PC-3 (cell line): ENCODE measurements at regions of chr20 and their contacts with region 1.

Region 1: GRCh38 chr20:19784511-19785172 is 26.6 kb downstream of the RIN2 start:
- DNase-seq: peak; percentile 96
- ATAC-seq: peak; percentile 90
- H3K4me3 ChIP-seq: peak overlapping the region; percentile 31; the same call in 1 of the 2 replicates
- H3K27ac ChIP-seq: peak overlapping the region; percentile 91
- H3K4me1 ChIP-seq: peaks cover 44% of the 10 kb centered on the region
- H3K27me3 ChIP-seq: no peaks in the 10 kb centered on the region
- CTCF ChIP-seq: peak; percentile 94

Region 2: DNA sequence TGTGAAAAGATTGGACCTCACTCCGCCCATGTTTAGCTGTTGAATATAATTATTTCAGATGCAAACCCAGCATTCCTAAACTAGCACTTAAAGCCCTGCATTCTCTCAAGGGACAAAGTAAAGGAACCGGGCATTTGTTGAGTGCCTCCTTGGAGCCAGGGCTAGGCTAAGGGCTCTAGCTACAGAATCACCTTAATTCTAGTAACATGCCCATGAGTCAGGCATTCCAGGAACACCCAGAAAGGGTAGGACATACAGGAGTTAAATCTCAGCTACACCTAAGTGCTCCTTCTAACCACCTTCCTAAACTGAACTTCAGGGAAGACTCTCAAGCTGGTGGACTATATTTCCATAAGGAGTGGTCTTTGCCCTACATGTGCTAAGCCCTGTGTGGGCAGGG is 482.8 kb before region 1 on chr20:
- CTCF ChIA-PET with region 1: no interaction called
- POLR2A ChIA-PET with region 1: no interaction called
- intact Hi-C with region 1: no loop called
- DNase-seq: no peak
- ATAC-seq: no peak
- H3K4me3 ChIP-seq: no peak overlapping the region
- H3K27ac ChIP-seq: no peak overlapping the region
- H3K4me1 ChIP-seq: no peaks in the 10 kb centered on the region
- H3K27me3 ChIP-seq: peaks cover 22% of the 10 kb centered on the region
- CTCF ChIP-seq: no peak

Region 3: DNA sequence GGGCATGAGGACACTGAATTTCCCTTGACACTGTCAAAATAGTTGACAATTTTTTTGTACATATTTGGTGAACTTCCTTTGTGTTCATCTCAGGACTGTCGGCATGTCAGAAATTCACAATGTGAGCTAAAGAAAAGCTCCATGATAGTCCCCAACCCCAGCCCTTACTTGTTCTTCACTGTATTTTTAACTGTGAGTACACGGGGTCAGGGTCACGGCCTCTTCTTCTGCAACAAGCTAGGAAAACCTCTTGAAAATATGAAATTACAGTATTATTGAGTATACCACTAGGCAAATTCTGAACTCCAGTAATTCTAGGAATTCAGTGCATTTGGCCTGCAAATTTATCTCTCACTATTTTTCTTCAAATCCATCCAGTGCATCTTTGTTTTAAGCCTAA is 372.8 kb before region 1 on chr20:
- CTCF ChIA-PET with region 1: no interaction called
- POLR2A ChIA-PET with region 1: no interaction called
- intact Hi-C with region 1: no loop called
- DNase-seq: no peak
- ATAC-seq: no peak
- H3K4me3 ChIP-seq: no peak overlapping the region
- H3K27ac ChIP-seq: no peak overlapping the region
- H3K4me1 ChIP-seq: no peaks in the 10 kb centered on the region
- H3K27me3 ChIP-seq: peaks cover 46% of the 10 kb centered on the region
- CTCF ChIP-seq: no peak

Region 4: GRCh38 chr20:19735446-19735845 is 49.2 kb before region 1 on chr20:
- CTCF ChIA-PET with region 1: no interaction called
- POLR2A ChIA-PET with region 1: interaction called, 4 read pairs
- intact Hi-C with region 1: loop called (anchors 2 kb)
- DNase-seq: peak; percentile 97
- ATAC-seq: peak; percentile 90
- H3K4me3 ChIP-seq: 0 out of 2 replicates have a peak overlapping the region, but pooled peaks have one; percentile 3
- H3K27ac ChIP-seq: peak overlapping the region; percentile 96
- H3K4me1 ChIP-seq: peaks cover 48% of the 10 kb centered on the region
- H3K27me3 ChIP-seq: no peaks in the 10 kb centered on the region
- CTCF ChIP-seq: no peak

Region 5: DNA sequence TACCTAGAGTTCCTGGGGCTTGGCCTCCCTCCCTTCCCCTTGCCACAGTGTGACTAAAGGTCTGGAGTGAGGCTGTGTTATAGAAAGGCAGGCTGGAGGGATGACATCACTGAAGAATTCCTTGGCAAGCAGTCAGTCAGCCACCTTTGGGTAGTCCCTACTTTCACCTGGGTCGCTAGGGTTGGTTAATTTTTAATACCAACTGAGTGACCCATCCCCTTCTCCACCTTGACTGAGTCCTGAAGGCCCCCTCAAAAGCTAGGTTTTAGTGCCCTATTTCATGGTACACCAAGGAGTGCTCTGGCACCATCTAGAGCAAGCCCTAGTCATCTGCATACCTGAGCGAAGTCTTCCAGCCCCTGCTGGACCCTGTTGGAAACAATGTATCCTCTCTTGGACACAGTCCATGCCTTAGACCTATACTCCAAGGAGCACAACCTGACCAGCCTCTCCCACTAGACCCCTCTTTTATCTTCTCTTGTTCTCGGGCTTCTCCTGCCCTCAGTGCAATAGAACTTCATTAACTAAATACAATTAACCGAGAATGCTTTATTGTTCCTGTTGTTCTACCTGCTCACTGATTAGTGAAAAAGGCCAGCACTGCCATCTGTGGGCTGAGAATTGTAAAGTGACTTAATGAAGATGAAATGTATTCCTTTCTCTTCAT is 18.0 kb after region 1 on chr20:
- CTCF ChIA-PET with region 1: no interaction called
- POLR2A ChIA-PET with region 1: no interaction called
- intact Hi-C with region 1: loop called (anchors 1 kb)
- DNase-seq: peak; percentile 87
- ATAC-seq: peak; percentile 88
- H3K4me3 ChIP-seq: no peak overlapping the region
- H3K27ac ChIP-seq: peak overlapping the region; percentile 52
- H3K4me1 ChIP-seq: peaks cover 28% of the 10 kb centered on the region
- H3K27me3 ChIP-seq: no peaks in the 10 kb centered on the region
- CTCF ChIP-seq: peak; percentile 84

Region 6: DNA sequence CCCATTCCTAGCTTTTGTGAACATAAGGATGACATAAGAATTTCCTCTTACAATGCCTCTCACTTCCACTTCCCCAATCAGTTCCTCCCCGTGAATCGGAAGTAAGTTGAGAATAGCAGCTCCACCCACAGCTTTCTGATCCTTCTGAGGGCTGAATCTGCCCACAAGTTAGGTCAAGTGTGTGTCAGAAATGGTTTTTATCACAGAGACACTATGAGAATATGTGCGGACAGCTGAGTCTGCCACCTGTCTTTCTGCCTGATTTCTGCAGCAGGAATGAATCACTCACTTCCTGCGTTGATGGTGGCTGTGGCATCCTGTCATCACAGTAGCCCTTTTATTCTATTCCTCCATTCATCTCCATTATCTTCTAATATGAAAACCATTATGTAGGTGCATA is 43.6 kb after region 1 on chr20:
- CTCF ChIA-PET with region 1: interaction called, 3 read pairs
- POLR2A ChIA-PET with region 1: no interaction called
- intact Hi-C with region 1: loop called (anchors 1 kb)
- DNase-seq: peak; percentile 97
- ATAC-seq: peak; percentile 88
- H3K4me3 ChIP-seq: no peak overlapping the region
- H3K27ac ChIP-seq: peak overlapping the region; percentile 95
- H3K4me1 ChIP-seq: peaks cover 45% of the 10 kb centered on the region
- H3K27me3 ChIP-seq: no peaks in the 10 kb centered on the region
- CTCF ChIP-seq: peak; percentile 67

Region 7: GRCh38 chr20:19889011-19889953 is 104.6 kb after region 1 on chr20:
- CTCF ChIA-PET with region 1: interaction called, 13 read pairs
- POLR2A ChIA-PET with region 1: no interaction called
- intact Hi-C with region 1: no loop called
- DNase-seq: peak; percentile 52
- ATAC-seq: peak; percentile 29
- H3K4me3 ChIP-seq: peak overlapping the region; percentile 60
- H3K27ac ChIP-seq: peak overlapping the region; percentile 91
- H3K4me1 ChIP-seq: peaks cover 66% of the 10 kb centered on the region
- H3K27me3 ChIP-seq: no peaks in the 10 kb centered on the region
- CTCF ChIP-seq: no peak

Region 8: GRCh38 chr20:19947611-19948264 is 163.1 kb after region 1 on chr20:
- CTCF ChIA-PET with region 1: no interaction called
- POLR2A ChIA-PET with region 1: no interaction called
- intact Hi-C with region 1: no loop called
- DNase-seq: peak; percentile 30
- ATAC-seq: peak; percentile 69
- H3K4me3 ChIP-seq: no peak overlapping the region
- H3K27ac ChIP-seq: no peak overlapping the region
- H3K4me1 ChIP-seq: peaks cover 12% of the 10 kb centered on the region
- H3K27me3 ChIP-seq: no peaks in the 10 kb centered on the region
- CTCF ChIP-seq: no peak

Region 9: DNA sequence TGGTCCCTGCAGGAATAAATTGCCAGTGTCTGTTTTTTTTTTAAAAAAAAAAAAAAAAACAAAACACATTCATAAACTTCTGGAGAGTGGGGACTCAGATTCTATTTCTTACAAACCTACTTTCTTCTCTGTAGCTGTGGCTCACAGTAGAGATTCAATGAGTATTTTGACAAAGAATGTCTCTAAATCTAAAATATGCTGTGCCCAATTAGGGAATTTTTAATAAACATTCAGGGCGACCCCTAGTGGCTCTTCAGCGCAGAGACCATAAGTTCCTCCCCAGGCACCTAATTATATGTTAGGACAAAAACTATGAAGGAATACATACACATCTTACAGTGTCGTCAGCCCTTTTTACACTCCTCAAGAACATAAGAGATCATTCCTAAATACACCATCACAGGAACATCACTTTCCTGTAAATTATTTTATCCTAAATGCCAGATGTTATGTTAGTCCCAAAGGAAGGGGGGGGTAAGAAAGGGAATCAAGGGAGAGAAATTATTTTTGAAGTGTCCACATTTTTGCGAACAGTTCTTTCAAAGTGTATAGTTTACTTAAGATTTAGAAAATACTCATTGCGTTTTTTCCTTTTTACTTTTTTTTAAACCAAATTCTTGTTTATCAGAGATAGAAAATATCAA is 210.7 kb after region 1 on chr20:
- CTCF ChIA-PET with region 1: interaction called, 6 read pairs
- POLR2A ChIA-PET with region 1: no interaction called
- intact Hi-C with region 1: loop called (anchors 1 kb)
- DNase-seq: peak; percentile 77
- ATAC-seq: no peak
- H3K4me3 ChIP-seq: no peak overlapping the region
- H3K27ac ChIP-seq: peak overlapping the region; percentile 96
- H3K4me1 ChIP-seq: peaks cover 53% of the 10 kb centered on the region
- H3K27me3 ChIP-seq: no peaks in the 10 kb centered on the region
- CTCF ChIP-seq: peak; percentile 97